OCI-LY7 (cell line): ENCODE measurements at regions of chr1 and their contacts with region 1.

Region 1: GRCh38 chr1:88741413-88741812 is 57.3 kb downstream of the PKN2 start:
- DNase-seq: no peak
- H3K4me3 ChIP-seq: no peak overlapping the region
- H3K27ac ChIP-seq: no peak overlapping the region
- H3K4me1 ChIP-seq: no peaks in the 10 kb centered on the region
- CTCF ChIP-seq: no peak

Region 2: DNA sequence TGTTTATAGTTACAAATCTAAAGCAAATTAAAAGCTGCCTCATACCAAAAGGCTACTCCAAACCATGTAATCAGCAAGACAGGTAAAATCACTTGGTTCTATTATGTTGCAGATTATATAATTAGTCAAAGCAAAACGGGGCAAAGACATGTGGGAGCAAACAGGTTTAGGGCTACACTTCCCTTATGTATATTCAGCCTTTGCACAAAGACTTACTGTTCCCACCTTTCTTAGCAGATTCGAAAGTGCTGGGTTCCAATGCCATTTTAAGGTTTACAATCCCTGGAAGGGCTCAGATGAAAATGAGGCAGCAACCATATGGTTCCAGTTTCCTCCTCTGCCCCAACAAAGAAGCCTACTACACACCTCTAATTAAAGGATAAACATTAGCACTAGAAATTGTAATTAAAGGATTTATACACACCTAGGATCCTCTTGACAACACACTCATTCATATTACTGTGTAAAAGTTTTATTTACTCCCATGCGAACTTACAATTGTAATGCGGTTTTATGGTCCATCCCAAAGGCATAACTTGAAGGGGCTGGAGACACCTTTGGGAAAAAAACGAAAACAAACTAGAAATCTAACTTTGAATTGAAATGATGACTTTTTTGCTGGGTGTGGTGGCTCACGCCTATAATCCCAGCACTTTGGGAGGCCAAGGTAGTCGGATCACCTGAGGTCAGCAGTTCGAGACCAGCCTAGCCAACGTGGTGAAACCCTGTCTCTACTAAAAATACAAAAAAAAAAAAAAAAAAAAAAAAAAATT is 174.6 kb before region 1 on chr1:
- CTCF ChIA-PET with region 1: no interaction called
- POLR2A ChIA-PET with region 1: no interaction called
- intact Hi-C with region 1: no loop called
- DNase-seq: no peak
- H3K4me3 ChIP-seq: no peak overlapping the region
- H3K27ac ChIP-seq: no peak overlapping the region
- H3K4me1 ChIP-seq: no peaks in the 10 kb centered on the region
- CTCF ChIP-seq: no peak

Region 3: DNA sequence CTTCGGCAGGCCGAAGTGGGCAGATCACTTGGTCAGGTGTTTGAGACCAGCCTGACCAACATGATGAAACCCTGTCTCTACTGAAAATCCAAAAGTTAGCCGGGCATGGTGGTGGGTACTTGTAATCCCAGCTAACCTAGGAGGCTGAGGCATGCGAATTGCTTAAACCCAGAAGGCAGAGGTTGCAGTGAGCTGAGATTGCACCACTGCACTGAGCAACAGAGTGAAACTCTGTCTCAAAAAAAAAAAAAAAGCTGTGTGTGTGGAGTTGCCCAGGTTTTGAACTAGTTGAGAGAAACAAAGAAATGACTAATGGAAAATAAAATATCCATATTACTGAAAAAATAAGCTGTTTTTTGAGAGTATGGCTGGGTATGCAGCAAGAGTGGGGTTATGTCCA is 49.8 kb after region 1 on chr1:
- CTCF ChIA-PET with region 1: no interaction called
- POLR2A ChIA-PET with region 1: no interaction called
- intact Hi-C with region 1: loop called (anchors 5 kb)
- DNase-seq: no peak
- H3K4me3 ChIP-seq: no peak overlapping the region
- H3K27ac ChIP-seq: no peak overlapping the region
- H3K4me1 ChIP-seq: no peaks in the 10 kb centered on the region
- CTCF ChIP-seq: no peak